ENCODE measurements at regions of chr9 and their contacts with region 1.

Region 1: GRCh38 chr9:109166771-109167601 is at the start of gene FRRS1L:
- DNase-seq: no peak
- H3K4me3 ChIP-seq: peak within 1 kb of the TSS; percentile 30
- CTCF ChIP-seq: no peak

Region 2: GRCh38 chr9:109129470-109130197 is 37.4 kb before region 1 on chr9:
- in situ Hi-C with region 1: loop called (anchors 5 kb)
- DNase-seq: no peak
- H3K4me3 ChIP-seq: no peak overlapping the region
- CTCF ChIP-seq: no peak